ENCODE measurements at regions of chr10 and their contacts with region 1.

Region 1: GRCh38 chr10:124886195-124886594 is 55.7 kb upstream of the ZRANB1 start:
- DNase-seq: no peak
- H3K4me3 ChIP-seq: no peak overlapping the region
- H3K27ac ChIP-seq: no peak overlapping the region
- H3K4me1 ChIP-seq: no peaks in the 10 kb centered on the region
- H3K27me3 ChIP-seq: no peaks in the 10 kb centered on the region
- CTCF ChIP-seq: no peak

Region 2: GRCh38 chr10:124943301-124944092 is 57.3 kb after region 1 on chr10:
- intact Hi-C with region 1: loop called (anchors 2 kb)
- DNase-seq: no peak
- H3K4me3 ChIP-seq: no peak overlapping the region
- H3K27ac ChIP-seq: no peak overlapping the region
- H3K4me1 ChIP-seq: peaks cover 0 to 92% (median 36%) of the 10 kb centered on the region in 4 donors
- H3K27me3 ChIP-seq: no peaks in the 10 kb centered on the region
- CTCF ChIP-seq: no peak